HEK293 (cell line): ENCODE measurements at regions of chr1 and their contacts with region 1.

Region 1: GRCh38 chr1:149962123-149962548 is 25.5 kb upstream of the MTMR11 start:
- H3K4me3 ChIP-seq: no peak overlapping the region
- H3K27ac ChIP-seq: no peak overlapping the region
- H3K4me1 ChIP-seq: no peaks in the 10 kb centered on the region
- CTCF ChIP-seq: peak; percentile 22; the same call in 1 of the 2 replicates

Region 2: DNA sequence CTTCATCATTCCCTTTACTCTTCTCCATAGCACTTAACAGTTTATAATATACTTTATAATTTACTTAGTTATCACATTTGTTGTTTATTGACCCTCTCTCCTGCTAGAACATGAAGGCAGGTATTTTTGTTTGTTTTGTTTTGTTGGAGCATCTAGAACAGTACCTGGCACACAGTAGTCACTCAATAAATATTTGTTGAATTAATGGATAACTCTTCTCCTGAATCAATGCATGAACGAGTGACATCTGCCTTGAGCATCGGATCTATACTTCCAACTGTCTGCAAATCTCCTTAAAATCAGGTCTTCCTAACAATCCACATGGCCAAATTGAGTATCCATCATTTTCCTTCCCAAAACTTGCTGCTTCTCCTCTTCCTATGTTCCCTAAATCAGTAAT is 10.4 kb after region 1 on chr1:
- CTCF ChIA-PET with region 1: interaction called, 11 read pairs
- POLR2A ChIA-PET with region 1: no interaction called
- H3K4me3 ChIP-seq: no peak overlapping the region
- H3K27ac ChIP-seq: no peak overlapping the region
- H3K4me1 ChIP-seq: peaks cover 3% of the 10 kb centered on the region
- CTCF ChIP-seq: no peak

Region 3: GRCh38 chr1:150010393-150011115 is 48.4 kb after region 1 on chr1 and contains the start of gene OTUD7B:
- CTCF ChIA-PET with region 1: interaction called, 12 read pairs
- POLR2A ChIA-PET with region 1: no interaction called
- H3K4me3 ChIP-seq: peak within 1 kb of the TSS; percentile 88
- H3K27ac ChIP-seq: peak within 1 kb of the TSS; percentile 84
- H3K4me1 ChIP-seq: peaks cover 5% of the 10 kb centered on the region
- CTCF ChIP-seq: peak; percentile 66; the same call in 1 of the 2 replicates

Region 4: DNA sequence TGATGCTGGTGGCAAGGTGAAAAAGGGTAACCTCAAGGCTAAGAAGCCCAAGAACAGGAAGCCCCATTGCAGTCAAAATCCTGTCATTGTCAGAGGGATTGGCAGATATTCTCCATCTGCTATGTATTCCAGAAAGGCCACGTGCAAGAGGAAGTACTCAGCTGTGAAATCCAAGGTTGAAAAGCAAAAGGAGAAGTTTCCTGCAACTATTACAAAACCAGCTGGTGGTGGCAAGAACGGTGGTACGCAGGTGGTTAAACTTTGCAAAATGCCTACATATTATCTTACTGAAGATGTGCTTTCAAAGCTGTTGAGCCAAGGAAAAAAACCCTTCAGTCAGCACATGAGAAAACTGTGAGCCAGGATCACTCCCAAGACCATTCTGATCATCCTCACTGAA is 91.8 kb after region 1 on chr1:
- CTCF ChIA-PET with region 1: interaction called, 34 read pairs
- POLR2A ChIA-PET with region 1: interaction called, 3 read pairs
- H3K4me3 ChIP-seq: no peak overlapping the region
- H3K27ac ChIP-seq: no peak overlapping the region
- H3K4me1 ChIP-seq: no peaks in the 10 kb centered on the region
- CTCF ChIP-seq: no peak

Region 5: GRCh38 chr1:150186789-150187559 is 224.8 kb after region 1 on chr1:
- CTCF ChIA-PET with region 1: interaction called, 16 read pairs
- POLR2A ChIA-PET with region 1: no interaction called
- H3K4me3 ChIP-seq: no peak overlapping the region
- H3K27ac ChIP-seq: no peak overlapping the region
- H3K4me1 ChIP-seq: peaks cover 3% of the 10 kb centered on the region; the same call in 1 of the 2 replicates
- CTCF ChIP-seq: peak; percentile 27; the same call in 1 of the 2 replicates